A673 (cell line): ENCODE measurements at regions of chr1 and their contacts with region 1.

Region 1: GRCh38 chr1:204941421-204942338 is 71.0 kb downstream of the NFASC start:
- DNase-seq: peak; percentile 75
- H3K4me3 ChIP-seq: no peak overlapping the region
- H3K27ac ChIP-seq: no peak overlapping the region
- H3K4me1 ChIP-seq: no peaks in the 10 kb centered on the region
- H3K27me3 ChIP-seq: peaks cover 15% of the 10 kb centered on the region
- CTCF ChIP-seq: peak; percentile 94

Region 2: DNA sequence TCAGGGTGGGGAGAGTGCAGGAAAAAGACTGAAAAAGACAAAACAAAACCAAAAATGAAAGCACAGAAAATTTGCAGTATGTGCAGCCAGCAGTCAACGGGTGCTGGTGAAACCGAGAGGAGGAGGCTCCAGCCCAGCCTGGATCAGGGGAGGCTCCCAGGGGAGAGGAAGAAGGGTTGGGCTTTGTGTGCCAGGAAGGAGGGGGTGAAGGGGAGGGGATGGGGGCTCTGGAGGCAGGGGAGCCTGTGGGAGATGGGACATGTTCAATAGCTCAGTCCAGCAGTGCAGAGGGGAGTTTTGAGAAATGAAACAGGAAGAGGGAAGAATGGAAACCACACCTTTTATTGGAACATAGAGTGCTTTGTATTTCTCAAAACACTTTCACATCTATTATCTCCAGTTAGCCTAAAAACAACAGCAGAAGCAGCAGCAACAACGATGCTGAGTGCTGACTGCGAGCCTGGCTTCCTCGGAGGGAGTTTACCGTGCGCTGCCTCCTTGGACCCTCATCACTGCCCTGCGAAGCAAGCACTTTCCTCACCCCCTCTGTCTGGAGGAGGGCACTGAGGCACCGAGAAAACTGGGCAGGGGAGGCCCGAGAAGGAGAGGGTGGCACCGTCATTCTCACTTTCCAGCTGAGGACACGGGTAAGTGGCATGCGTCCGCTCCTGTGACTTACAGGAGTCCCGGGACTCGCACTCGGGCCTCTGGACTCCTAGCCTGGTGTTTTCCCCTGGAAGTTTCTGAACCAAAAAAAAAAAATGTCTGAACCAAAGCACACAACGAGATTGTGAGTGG is 362.6 kb before region 1 on chr1:
- CTCF ChIA-PET with region 1: no interaction called
- POLR2A ChIA-PET with region 1: no interaction called
- intact Hi-C with region 1: loop called (anchors 10 kb)
- DNase-seq: peak; percentile 49
- H3K4me3 ChIP-seq: no peak overlapping the region
- H3K27ac ChIP-seq: no peak overlapping the region
- H3K4me1 ChIP-seq: no peaks in the 10 kb centered on the region
- H3K27me3 ChIP-seq: no peaks in the 10 kb centered on the region
- CTCF ChIP-seq: no peak

Region 3: DNA sequence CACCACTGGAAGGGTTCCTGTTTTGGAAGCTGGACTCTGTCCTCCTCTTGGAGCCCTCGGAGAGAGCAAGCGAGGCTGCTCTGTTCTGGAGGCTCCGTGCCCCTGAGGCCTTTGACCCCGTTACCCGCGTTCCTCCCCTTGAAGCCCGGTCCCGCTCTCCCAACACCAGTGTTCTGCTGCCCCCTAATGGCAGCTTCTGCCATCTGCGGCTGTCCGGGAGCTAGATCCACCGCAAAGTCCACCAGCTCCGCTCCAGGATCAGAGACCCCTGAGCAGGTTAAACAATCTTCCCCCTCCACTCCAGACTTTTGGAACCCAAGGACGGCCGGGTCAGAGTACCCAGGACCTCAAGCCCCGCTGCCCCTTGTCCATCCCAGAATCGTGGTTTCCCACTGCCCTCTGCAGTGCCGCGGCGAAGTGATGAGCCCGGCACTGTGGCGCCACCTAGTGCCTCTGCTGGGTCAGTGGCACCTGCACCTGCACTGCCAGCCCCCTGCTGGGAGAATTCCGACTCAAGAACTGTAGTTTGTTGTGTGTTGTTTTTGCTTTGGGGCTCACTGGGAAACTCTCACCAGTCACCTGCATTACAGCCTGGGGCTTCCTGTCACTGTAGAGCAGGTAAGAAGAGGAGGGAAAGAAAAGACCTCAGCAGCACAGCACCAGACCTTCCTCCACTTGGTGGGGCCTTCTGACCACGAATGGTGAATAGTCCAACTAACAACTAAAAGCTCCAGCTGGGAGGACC is 134.6 kb before region 1 on chr1:
- CTCF ChIA-PET with region 1: interaction called, 4 read pairs
- POLR2A ChIA-PET with region 1: no interaction called
- intact Hi-C with region 1: loop called (anchors 1 kb)
- DNase-seq: peak; percentile 86
- H3K4me3 ChIP-seq: peak overlapping the region; percentile 48
- H3K27ac ChIP-seq: no peak overlapping the region
- H3K4me1 ChIP-seq: no peaks in the 10 kb centered on the region
- H3K27me3 ChIP-seq: peaks cover 12% of the 10 kb centered on the region
- CTCF ChIP-seq: peak; percentile 100; the same call in 1 of the 2 replicates